ENCODE measurements at regions of chr4 and their contacts with region 1.

Region 1: DNA sequence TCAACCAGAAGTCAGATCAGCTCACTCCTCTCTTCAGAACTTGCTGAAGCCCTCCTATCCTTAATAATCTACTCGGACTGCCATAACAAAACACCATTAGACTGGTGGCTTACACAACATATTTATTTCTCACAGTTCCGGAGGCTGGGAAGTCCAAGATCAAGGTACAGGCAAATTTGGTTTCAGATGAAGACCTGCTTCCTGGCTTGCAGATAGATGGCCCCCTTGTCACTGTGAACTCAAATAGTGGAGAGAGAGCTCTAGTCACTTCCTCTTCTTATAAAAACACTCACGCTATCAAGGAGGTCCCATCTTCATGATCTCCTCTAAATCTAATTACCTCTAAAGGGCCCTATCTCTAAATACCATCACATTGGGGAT is 125.1 kb downstream of the CAMK2D start:
- DNase-seq: no peak
- H3K4me3 Mint-ChIP-seq: peak overlapping the region; percentile 42
- H3K27ac Mint-ChIP-seq: peak overlapping the region; percentile 45
- H3K4me1 Mint-ChIP-seq: peaks cover 63% of the 10 kb centered on the region
- H3K27me3 Mint-ChIP-seq: no peaks in the 10 kb centered on the region
- CTCF ChIP-seq: no peak

Region 2: DNA sequence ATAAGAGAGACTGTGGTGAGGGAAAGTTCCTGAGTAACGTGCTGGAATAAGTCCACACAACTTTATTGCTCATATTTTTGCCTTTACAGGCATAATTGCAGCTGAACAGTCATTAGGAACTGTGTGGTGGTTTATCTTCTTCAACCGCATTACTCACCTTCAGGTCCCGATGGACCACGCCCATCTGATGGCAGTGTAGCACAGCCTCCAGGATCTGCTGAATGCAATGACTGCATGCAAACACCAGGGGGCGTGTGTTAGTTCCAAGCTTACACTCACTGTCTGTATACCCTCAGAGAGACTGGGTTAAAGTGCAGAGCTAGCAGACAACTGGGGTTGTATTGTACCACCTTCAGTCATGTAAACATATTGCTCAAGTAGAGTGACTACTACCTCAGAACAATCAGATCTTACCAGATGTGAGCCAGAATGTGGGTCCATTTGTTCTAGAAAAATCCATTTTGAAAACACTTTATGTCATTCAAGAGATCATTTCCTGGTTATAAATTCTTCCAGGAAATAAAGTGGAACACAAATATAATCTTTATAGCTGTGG is 88.9 kb before region 1 on chr4:
- CTCF ChIA-PET with region 1: interaction called, 5 read pairs
- intact Hi-C with region 1: loop called (anchors 2 kb)
- DNase-seq: peak; percentile 87
- H3K4me3 Mint-ChIP-seq: no peak overlapping the region
- H3K27ac Mint-ChIP-seq: peak overlapping the region; percentile 56
- H3K4me1 Mint-ChIP-seq: peaks cover 9% of the 10 kb centered on the region
- H3K27me3 Mint-ChIP-seq: no peaks in the 10 kb centered on the region
- CTCF ChIP-seq: peak; percentile 82

Region 3: DNA sequence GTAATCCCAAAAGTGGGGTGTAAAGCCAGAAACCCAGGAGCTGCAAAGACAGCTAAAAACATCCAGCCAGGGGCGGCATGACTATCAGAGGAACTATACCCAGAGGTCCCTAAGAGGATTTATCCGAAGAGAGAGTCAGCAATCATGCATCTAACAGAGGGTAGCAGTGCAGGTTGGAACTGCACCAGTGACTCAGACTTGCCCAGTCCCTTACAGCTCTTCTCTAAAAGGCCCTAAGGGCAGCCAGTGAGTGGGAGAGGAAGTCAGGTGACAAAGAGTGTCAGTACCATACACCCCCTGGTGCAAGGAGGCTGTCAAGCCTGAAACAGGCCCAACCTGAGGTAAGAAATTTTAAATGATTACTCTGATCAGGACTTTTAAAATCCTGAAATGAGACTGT is 37.0 kb after region 1 on chr4:
- CTCF ChIA-PET with region 1: interaction called, 3 read pairs
- intact Hi-C with region 1: loop called (anchors 5 kb)
- DNase-seq: peak; percentile 25
- H3K4me3 Mint-ChIP-seq: no peak overlapping the region
- H3K27ac Mint-ChIP-seq: no peak overlapping the region
- H3K4me1 Mint-ChIP-seq: peaks cover 27% of the 10 kb centered on the region
- H3K27me3 Mint-ChIP-seq: no peaks in the 10 kb centered on the region
- CTCF ChIP-seq: no peak

Region 4: GRCh38 chr4:113756005-113756410 is 119.6 kb after region 1 on chr4:
- CTCF ChIA-PET with region 1: no interaction called
- intact Hi-C with region 1: loop called (anchors 2 kb)
- DNase-seq: no peak
- H3K4me3 Mint-ChIP-seq: no peak overlapping the region
- H3K27ac Mint-ChIP-seq: no peak overlapping the region
- H3K4me1 Mint-ChIP-seq: peaks cover 9% of the 10 kb centered on the region
- H3K27me3 Mint-ChIP-seq: no peaks in the 10 kb centered on the region
- CTCF ChIP-seq: no peak

Measured in Calu3 (cell line).